Thyroid gland (tissue), 4 donors: ENCODE measurements at regions of chr14 and their contacts with region 1.

Region 1: DNA sequence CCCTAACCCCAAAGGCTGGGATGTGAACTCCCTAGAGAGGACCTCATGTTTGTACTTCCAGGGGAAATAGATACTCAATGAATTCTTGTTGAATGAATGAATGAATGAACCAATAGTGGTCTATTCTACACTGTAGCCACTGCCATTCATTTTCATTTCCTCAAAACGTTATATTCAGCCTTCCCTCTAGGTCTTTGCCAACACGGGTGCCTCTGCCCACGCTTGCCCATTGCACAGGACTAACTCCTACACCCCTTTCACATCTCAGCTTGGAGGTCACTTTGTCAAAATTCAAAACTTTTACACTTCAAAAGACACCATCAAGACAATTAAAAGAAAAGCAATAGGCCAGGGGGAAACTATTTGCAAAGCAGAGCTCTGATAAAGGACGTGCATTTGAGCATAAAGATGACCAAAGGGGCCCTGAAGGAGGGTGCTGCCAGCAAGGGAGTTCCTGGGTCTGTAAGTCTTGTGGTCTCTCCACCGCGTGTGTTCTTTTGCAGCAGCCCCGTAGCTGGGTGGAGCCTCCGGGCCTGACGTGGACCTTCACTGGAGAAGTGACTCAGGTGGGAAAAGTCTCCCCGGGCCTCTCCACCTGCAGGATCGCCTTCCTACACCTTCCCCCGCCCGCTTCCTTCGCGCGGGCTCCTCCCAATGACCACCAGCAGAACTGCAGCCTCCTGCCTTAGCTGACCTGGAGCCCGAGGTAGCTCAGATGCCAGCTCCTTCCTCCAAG is 31.5 kb downstream of the TMEM63C start:
- DNase-seq: peak; percentile 53 to 58
- H3K4me3 ChIP-seq: no peak overlapping the region
- H3K27ac ChIP-seq: no peak overlapping the region
- H3K4me1 ChIP-seq: no peaks in the 10 kb centered on the region
- H3K27me3 ChIP-seq: no peaks in the 10 kb centered on the region
- CTCF ChIP-seq: peak in 4 of 6 experiments; percentile 27 to 69 (median 46)
- POLR2A ChIP-seq: no peak

Region 2: DNA sequence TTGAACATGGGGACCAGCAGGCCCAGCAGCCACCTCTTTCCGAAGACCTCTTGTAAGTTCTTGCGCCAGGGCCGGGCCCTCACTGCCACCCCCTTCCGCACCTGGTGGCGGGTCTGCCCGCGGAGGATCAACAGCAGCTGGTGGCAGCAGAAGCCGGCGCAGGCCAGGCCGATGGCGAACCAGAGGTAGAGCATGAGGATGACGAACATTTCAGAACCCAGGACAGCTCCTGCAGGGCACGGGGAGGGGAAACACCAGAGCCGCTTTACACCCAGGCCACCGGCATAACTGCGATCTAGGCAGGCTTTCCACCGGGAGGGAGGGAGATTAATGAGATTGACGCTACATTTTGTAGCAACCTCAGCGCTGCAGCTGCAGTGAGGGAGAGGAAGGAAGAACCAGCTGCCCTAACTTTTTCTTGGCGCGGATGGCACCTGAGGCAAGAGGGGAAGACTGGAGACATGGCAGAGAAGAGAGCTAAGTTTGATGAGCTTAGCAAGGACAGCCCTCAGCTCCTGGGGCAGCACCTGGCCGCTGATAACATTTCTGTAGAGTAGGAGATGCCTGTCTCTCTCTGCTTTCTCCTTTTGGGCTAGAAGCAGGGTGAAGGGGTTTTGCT is 79.3 kb before region 1 on chr14:
- intact Hi-C with region 1: loop called (anchors 10 kb)
- DNase-seq: peak; percentile 57 to 74
- H3K4me3 ChIP-seq: no peak overlapping the region
- H3K27ac ChIP-seq: no peak overlapping the region
- H3K4me1 ChIP-seq: no peaks in the 10 kb centered on the region
- H3K27me3 ChIP-seq: peaks cover 7% of the 10 kb centered on the region
- CTCF ChIP-seq: no peak
- POLR2A ChIP-seq: no peak